ENCODE measurements at regions of chr11 and their contacts with region 1.

Region 1: GRCh38 chr11:86483940-86484794 is 109.5 kb downstream of the CCDC81 start:
- DNase-seq: peak; percentile 42 to 92
- H3K4me3 ChIP-seq: no peak overlapping the region
- H3K27ac ChIP-seq: peak overlapping the region; percentile 67 to 85
- H3K4me1 ChIP-seq: peaks cover 4 to 16% of the 10 kb centered on the region in 2 donors
- H3K27me3 ChIP-seq: no peaks in the 10 kb centered on the region
- CTCF ChIP-seq: no peak

Region 2: DNA sequence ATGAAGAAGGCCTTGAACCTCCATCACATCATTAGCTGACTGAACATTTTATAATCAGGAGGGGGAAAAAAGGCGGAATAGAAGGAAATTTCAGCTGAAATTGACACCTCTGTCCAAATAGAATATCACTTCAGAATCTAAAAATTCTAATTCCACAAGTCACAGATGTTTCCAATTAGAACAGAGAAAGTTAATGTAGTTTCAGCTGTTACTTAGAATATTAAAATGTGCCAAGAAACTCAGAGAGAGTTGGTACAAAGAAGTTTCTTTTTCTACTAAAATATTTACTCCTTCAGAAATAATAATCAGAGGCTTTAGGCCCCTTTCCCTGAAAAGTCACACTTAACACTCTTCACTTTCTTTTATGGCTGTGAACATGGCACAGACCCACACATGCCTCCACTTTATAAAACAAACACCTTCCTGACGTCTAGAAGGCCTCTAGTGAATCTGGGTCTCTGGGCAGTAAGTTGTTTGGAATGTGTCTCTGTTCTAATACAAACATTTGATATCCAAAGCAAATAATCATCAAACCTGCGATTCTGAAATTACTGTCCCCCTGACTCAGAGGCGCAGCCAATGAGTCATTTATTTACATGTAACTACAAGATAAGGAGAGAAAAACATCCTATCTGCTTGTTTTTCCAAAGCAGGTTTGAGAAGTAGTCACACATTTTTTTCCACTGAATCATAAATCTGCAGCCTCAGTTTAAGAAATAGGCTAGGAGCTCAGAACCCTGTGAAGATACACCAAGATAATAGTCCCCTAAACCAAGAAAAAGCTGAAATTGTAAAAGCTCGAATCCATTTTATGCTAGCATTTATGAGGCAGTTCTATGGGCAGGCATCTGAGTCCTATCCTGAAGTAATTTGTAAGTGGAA is 39.8 kb after region 1 on chr11:
- intact Hi-C with region 1: loop called (anchors 2 kb)
- DNase-seq: peak in 1 of 2 donors; percentile 75
- H3K4me3 ChIP-seq: no peak overlapping the region
- H3K27ac ChIP-seq: peak overlapping the region; percentile 66 to 79
- H3K4me1 ChIP-seq: peaks cover 8 to 34% of the 10 kb centered on the region in 2 donors
- H3K27me3 ChIP-seq: no peaks in the 10 kb centered on the region
- CTCF ChIP-seq: no peak

Region 3: GRCh38 chr11:86537541-86538222 is 53.5 kb after region 1 on chr11:
- intact Hi-C with region 1: no loop called
- DNase-seq: no peak
- H3K4me3 ChIP-seq: no peak overlapping the region
- H3K27ac ChIP-seq: no peak overlapping the region
- H3K4me1 ChIP-seq: no peaks in the 10 kb centered on the region
- H3K27me3 ChIP-seq: no peaks in the 10 kb centered on the region
- CTCF ChIP-seq: no peak